ENCODE measurements at regions of chr14 and their contacts with region 1.

Region 1: GRCh38 chr14:100312877-100313400 is 6.7 kb upstream of the SLC25A29 start:
- DNase-seq: no peak
- H3K4me3 ChIP-seq: no peak overlapping the region
- H3K27ac ChIP-seq: no peak overlapping the region
- H3K4me1 ChIP-seq: peaks cover 0 to 9% (median 4%) of the 10 kb centered on the region in 4 donors
- H3K27me3 ChIP-seq: peaks cover 7% of the 10 kb centered on the region
- CTCF ChIP-seq: no peak
- EP300 ChIP-seq: no peak
- POLR2A ChIP-seq: no peak

Region 2: GRCh38 chr14:100278702-100279101 is 34.2 kb before region 1 on chr14:
- in situ Hi-C with region 1: no loop called
- intact Hi-C with region 1: loop called (anchors 5 kb)
- DNase-seq: no peak
- H3K4me3 ChIP-seq: no peak overlapping the region
- H3K27ac ChIP-seq: no peak overlapping the region
- H3K4me1 ChIP-seq: peaks cover 0 to 20% (median 9%) of the 10 kb centered on the region in 4 donors
- H3K27me3 ChIP-seq: no peaks in the 10 kb centered on the region
- CTCF ChIP-seq: no peak
- EP300 ChIP-seq: no peak
- POLR2A ChIP-seq: no peak